ENCODE measurements at regions of chr12 and their contacts with region 1.

Region 1: DNA sequence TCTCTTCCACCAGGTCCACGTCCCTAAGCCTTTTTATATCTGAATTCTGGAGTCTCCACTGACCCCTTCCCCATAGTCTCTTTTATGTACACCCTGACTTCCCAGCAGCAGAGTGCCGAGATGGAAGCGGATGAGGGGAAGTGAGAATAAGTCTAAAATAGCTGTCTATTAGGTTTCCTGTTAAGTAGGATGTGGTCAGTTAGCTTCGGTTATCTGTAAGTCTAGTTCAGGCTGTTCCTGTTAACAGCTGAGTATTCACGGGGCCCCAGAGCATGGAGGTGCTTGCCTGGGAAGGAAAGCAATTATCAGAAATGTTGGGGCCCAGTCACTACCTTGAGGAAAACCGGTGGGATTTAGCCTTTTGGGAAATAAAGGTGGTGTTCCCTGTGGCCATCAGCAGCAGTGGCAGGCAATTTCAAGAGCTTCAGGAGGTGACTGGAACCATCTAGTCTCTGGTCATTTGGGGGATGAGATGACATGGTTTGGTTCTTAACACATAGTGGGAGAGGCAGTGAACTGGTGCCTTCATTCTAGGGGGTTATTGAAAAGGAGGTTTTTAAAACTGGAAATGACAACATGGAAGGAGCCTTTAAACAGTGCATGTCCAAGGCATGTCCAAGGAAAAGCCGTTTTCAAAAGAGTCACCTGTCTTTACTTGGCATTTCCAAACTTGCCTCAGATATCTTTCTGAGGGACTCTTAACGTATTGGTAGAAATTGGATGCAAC is 21.8 kb downstream of the CHST11 start:
- DNase-seq: peak in 5 of 9 experiments; percentile 42 to 83 (median 64)
- ATAC-seq: peak; percentile 76
- H3K4me3 ChIP-seq: peak overlapping the region; percentile 39 to 43
- H3K4me3 Mint-ChIP-seq: peak overlapping the region; percentile 85
- H3K27ac ChIP-seq: peak overlapping the region; percentile 45 to 70
- H3K27ac Mint-ChIP-seq: peak overlapping the region; percentile 93
- H3K4me1 ChIP-seq: peaks cover 76% of the 10 kb centered on the region
- H3K4me1 Mint-ChIP-seq: peaks cover 85% of the 10 kb centered on the region
- H3K27me3 ChIP-seq: no peaks in the 10 kb centered on the region
- H3K27me3 Mint-ChIP-seq: no peaks in the 10 kb centered on the region
- CTCF ChIP-seq: no peak

Region 2: GRCh38 chr12:104462931-104463339 is 15.6 kb before region 1 on chr12:
- CTCF ChIA-PET with region 1: interaction called, 6 read pairs
- POLR2A ChIA-PET with region 1: interaction called, 25 read pairs
- intact Hi-C with region 1: loop called (anchors 1 to 2 kb)
- DNase-seq: peak in 7 of 9 experiments; percentile 27 to 85 (median 63)
- ATAC-seq: peak; percentile 51
- H3K4me3 ChIP-seq: peak overlapping the region in 1 of 2 experiments; percentile 9
- H3K4me3 Mint-ChIP-seq: peak overlapping the region; percentile 79
- H3K27ac ChIP-seq: peak overlapping the region; percentile 23 to 71
- H3K27ac Mint-ChIP-seq: peak overlapping the region; percentile 95
- H3K4me1 ChIP-seq: peaks cover 90% of the 10 kb centered on the region
- H3K4me1 Mint-ChIP-seq: peaks cover 81% of the 10 kb centered on the region
- H3K27me3 ChIP-seq: no peaks in the 10 kb centered on the region
- H3K27me3 Mint-ChIP-seq: no peaks in the 10 kb centered on the region
- CTCF ChIP-seq: no peak

Measured in CD8-positive, alpha-beta T cell (primary cell).